ENCODE measurements at regions of chr3 and their contacts with region 1.

Region 1: DNA sequence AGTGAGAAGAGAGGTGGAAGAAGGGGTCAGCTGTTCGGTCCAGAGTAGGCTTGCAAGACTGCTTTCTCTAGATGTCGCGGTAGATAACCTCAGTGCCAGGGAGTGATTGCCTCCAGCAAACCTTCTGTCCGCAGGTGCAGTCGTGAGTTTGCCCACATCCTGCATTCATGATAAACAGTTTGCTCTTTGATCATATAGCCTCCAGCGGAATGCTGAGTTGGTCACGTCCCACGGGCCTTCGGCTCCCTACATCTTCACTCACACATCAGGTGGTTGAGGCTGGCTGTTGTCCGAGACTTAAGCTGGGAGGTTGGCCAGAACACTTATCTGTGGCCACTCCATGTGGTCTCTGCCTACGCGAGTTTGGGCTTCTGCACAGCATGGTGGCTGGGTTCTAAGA is 62.1 kb upstream of the NR2C2 start:
- DNase-seq: no peak
- H3K4me3 ChIP-seq: no peak overlapping the region
- CTCF ChIP-seq: no peak

Region 2: DNA sequence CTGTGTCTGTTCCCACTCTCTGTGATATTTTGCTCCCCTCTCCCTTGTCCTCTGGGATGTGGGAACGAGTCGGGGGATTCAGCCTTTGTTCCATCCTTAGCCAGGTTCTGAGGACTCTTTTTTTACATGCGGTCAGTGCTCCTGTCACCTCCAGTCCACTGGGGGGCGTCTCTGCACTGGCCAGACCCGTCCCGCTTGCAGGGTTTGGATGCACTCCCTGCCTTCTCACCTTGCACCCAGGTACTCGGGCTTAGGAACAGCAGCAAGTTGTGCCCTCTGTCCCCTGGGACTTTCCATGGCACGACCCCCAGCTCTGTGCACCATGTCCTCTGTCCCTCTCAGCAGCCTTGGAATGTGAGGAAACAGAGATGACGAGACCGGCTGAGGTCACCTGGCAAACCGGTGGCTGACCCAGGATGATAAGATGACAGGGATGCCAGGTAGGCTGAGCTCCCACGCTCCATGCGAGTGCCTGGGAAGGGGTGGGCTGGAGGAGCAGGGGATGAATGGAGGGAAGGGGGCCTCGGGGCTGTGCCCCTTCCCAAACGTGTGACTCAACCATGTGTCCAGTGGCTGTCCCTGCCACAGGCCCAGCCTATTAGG is 93.8 kb before region 1 on chr3:
- in situ Hi-C with region 1: no loop called
- DNase-seq: no peak
- H3K4me3 ChIP-seq: no peak overlapping the region
- CTCF ChIP-seq: peak; percentile 55

Region 3: DNA sequence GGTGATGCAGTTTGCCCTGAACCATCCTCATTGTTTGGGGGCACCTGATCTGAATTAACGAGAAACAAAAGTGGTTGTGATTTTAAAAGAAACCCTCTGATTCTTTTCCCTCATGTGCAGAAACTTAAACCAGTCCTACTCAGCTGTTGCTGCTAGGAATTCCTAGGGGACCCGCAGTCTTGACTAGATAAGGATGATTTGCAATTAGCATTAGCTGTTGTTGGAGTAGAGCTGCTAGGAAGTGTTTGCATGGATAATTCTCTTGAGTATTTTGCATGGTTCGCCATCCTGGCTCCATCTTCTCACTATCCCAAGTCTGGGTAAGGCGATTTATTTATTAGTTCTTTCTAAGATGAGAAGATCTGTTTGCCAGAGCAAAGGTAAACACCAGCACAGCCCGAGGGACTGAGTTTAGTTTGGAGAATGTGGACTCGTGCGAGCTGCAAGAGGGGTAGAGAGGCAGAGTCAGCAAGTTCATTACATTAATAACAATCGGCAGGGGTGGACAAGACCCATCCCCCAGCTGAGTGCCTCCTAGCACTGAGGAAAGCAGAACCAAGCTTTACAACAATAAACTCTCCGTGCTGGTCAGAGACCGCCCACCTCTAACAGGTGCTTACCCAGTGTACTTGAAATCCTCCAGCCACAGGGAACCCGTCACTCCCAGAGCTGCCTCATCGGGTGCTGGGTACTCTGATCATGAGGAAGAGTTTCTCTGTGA is 62.5 kb before region 1 on chr3:
- in situ Hi-C with region 1: loop called (anchors 10 kb)
- DNase-seq: no peak
- H3K4me3 ChIP-seq: no peak overlapping the region
- CTCF ChIP-seq: no peak